ENCODE measurements at regions of chr4 and their contacts with region 1.

Region 1: DNA sequence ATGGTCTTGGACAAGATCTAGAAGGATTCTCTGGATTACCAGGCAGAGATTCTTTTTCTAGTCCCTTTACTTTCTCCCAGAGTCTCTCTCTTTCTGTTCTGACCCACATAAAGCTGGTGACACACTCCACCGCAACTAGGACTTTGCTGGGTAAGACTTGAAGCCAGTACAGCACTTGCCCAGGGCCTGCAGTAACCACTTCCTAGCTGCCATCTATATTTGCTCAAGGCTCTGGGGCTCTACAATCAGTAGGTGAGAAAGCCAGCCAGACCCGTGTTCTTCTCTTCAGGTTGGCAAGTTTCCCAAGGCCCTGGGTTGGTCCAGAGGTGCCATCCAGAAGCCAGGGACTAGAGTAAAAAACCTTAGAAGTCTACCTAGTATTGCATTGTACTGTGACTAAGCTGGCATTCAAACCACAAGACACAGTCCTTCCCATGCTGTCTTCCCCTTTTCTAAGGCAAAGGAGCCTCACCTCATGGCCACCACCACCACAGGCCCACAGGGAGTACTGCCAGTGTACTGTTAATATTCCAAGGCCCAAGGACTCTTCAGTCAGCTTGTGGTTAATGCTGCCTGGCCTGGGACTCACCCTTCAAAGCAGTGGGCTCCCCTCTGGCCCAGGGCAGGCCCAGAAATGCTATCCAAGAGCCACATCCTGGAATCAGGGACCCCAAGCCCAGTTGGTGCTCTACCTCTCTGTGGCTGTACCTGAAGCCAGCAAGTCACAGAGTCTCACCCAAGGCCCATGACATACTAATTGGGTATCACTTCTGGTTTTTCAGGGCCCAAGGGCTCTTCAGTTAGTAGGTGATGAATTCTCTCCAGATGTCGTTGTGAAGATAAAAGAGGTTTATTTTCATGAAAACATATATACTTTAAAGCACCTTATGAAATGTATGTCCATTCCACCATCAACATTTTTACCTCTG is 54.7 kb downstream of the CD38 start:
- DNase-seq: no peak
- ATAC-seq: peak; percentile 43 to 85 (median 58)
- H3K4me3 ChIP-seq: no peak overlapping the region
- H3K4me3 Mint-ChIP-seq: peak overlapping the region; percentile 54
- H3K27ac ChIP-seq: peak overlapping the region; percentile 18
- H3K27ac Mint-ChIP-seq: peak overlapping the region; percentile 46 to 87
- H3K4me1 ChIP-seq: peaks cover 10% of the 10 kb centered on the region
- H3K4me1 Mint-ChIP-seq: peaks cover 40 to 43% of the 10 kb centered on the region in 2 donors
- H3K27me3 ChIP-seq: no peaks in the 10 kb centered on the region
- H3K27me3 Mint-ChIP-seq: no peaks in the 10 kb centered on the region
- CTCF ChIP-seq: no peak

Region 2: GRCh38 chr4:15410750-15411149 is 422.0 kb before region 1 on chr4:
- intact Hi-C with region 1: loop called (anchors 5 kb)
- DNase-seq: peak in 1 of 2 donors; percentile 55
- ATAC-seq: peak; percentile 69 to 80 (median 74)
- H3K4me3 ChIP-seq: no peak overlapping the region
- H3K4me3 Mint-ChIP-seq: peak overlapping the region; percentile 81
- H3K27ac ChIP-seq: peak overlapping the region; percentile 64
- H3K27ac Mint-ChIP-seq: peak overlapping the region; percentile 80
- H3K4me1 ChIP-seq: peaks cover 11% of the 10 kb centered on the region
- H3K4me1 Mint-ChIP-seq: peaks cover 50 to 62% of the 10 kb centered on the region in 2 donors
- H3K27me3 ChIP-seq: no peaks in the 10 kb centered on the region
- H3K27me3 Mint-ChIP-seq: peaks cover 0 to 3% of the 10 kb centered on the region in 2 donors
- CTCF ChIP-seq: no peak

Region 3: DNA sequence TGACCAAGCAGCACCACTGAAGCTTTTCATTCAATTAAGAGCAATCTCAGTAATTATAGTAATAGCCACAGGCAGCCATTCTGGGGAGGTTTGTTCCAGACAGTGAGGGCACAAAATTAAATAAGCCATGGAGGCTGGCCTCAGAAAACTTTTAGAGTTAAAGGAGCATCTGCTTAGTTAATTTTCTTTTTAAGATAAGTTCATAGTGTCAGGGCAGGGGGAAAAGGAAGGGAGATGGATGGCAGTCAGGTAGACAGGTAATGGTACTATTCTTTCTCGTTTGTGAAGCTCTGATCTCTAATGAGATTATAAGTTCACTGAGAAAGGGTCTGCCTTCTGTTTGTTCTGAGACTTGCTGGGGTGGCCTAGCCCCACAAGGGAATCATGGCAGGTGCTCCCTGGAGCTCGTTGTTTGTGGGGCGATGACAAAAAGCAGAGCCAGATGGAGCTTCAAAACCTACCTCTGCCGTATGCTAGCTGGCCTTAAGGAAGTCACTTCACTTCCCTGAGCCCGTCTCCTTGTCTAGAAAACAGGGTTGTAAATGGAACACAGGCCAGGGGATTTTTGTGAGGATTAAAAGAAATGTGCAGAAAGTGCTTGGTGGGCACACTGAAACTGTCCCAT is 174.8 kb after region 1 on chr4:
- intact Hi-C with region 1: no loop called
- DNase-seq: no peak
- ATAC-seq: no peak
- H3K4me3 ChIP-seq: no peak overlapping the region
- H3K4me3 Mint-ChIP-seq: no peak overlapping the region
- H3K27ac ChIP-seq: no peak overlapping the region
- H3K27ac Mint-ChIP-seq: no peak overlapping the region
- H3K4me1 ChIP-seq: no peaks in the 10 kb centered on the region
- H3K4me1 Mint-ChIP-seq: no peaks in the 10 kb centered on the region
- H3K27me3 ChIP-seq: peaks cover 6% of the 10 kb centered on the region
- H3K27me3 Mint-ChIP-seq: peaks cover 0 to 5% of the 10 kb centered on the region in 2 donors
- CTCF ChIP-seq: no peak

Region 4: GRCh38 chr4:16322183-16322582 is 489.4 kb after region 1 on chr4:
- intact Hi-C with region 1: no loop called
- DNase-seq: no peak
- ATAC-seq: no peak
- H3K4me3 ChIP-seq: no peak overlapping the region
- H3K4me3 Mint-ChIP-seq: no peak overlapping the region
- H3K27ac ChIP-seq: no peak overlapping the region
- H3K27ac Mint-ChIP-seq: no peak overlapping the region
- H3K4me1 ChIP-seq: no peaks in the 10 kb centered on the region
- H3K4me1 Mint-ChIP-seq: no peaks in the 10 kb centered on the region
- H3K27me3 ChIP-seq: no peaks in the 10 kb centered on the region
- H3K27me3 Mint-ChIP-seq: peaks cover 8 to 24% of the 10 kb centered on the region in 2 donors
- CTCF ChIP-seq: no peak

Region 5: DNA sequence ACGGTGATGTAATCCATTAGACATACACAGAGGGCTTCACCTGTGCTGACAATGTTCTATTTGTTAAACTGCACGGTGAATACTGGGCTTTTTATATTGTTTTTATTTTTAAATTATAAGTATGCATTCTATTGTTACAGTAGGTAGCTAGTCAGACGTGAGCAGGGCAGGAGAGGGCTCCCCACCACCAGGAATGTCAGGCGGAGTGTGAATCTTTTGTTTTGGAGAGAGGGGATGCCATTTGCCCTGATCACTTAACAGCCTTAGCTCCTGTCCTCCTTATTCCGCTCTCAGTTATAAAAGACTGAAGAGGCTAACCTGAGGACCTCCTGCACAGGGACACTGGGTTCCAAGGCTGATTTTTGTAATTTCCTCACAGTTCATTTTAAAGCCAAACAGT is 545.1 kb after region 1 on chr4:
- intact Hi-C with region 1: no loop called
- DNase-seq: no peak
- ATAC-seq: no peak
- H3K4me3 ChIP-seq: no peak overlapping the region
- H3K4me3 Mint-ChIP-seq: no peak overlapping the region
- H3K27ac ChIP-seq: no peak overlapping the region
- H3K27ac Mint-ChIP-seq: no peak overlapping the region
- H3K4me1 ChIP-seq: no peaks in the 10 kb centered on the region
- H3K4me1 Mint-ChIP-seq: no peaks in the 10 kb centered on the region
- H3K27me3 ChIP-seq: no peaks in the 10 kb centered on the region
- H3K27me3 Mint-ChIP-seq: no peaks in the 10 kb centered on the region
- CTCF ChIP-seq: no peak

Region 6: GRCh38 chr4:16652732-16653305 is 820.0 kb after region 1 on chr4:
- intact Hi-C with region 1: no loop called
- DNase-seq: no peak
- ATAC-seq: no peak
- H3K4me3 ChIP-seq: no peak overlapping the region
- H3K4me3 Mint-ChIP-seq: no peak overlapping the region
- H3K27ac ChIP-seq: no peak overlapping the region
- H3K27ac Mint-ChIP-seq: no peak overlapping the region
- H3K4me1 ChIP-seq: no peaks in the 10 kb centered on the region
- H3K4me1 Mint-ChIP-seq: no peaks in the 10 kb centered on the region
- H3K27me3 ChIP-seq: no peaks in the 10 kb centered on the region
- H3K27me3 Mint-ChIP-seq: no peaks in the 10 kb centered on the region
- CTCF ChIP-seq: no peak